ENCODE measurements at regions of chr10 and their contacts with region 1.

Region 1: DNA sequence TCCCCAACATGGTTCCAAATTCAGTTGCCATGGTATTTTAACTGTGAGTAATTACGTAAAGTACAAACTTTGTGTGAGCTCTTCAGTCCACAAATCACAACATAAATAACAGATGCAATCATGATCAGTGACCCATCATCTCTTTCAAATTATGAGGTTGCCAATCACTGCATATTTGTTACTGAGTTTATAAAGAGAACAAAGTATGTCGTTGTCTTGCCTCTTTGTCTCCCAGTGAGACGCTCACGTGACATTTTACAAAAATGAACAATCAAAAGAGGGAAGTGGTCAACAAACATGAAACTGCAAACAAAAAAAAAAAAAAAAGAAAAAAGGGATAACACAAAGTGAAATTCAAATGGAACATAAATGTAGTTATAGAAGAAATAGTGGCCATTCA is 122.7 kb upstream of the PDSS1 start:
- DNase-seq: peak; percentile 67
- ATAC-seq: peak; percentile 87
- H3K4me3 ChIP-seq: no peak overlapping the region
- H3K27ac ChIP-seq: 0 out of 2 replicates have a peak overlapping the region, but pooled peaks have one; percentile 18
- H3K4me1 ChIP-seq: peaks cover 7% of the 10 kb centered on the region; the same call in 1 of the 2 replicates
- H3K27me3 ChIP-seq: no peaks in the 10 kb centered on the region
- CTCF ChIP-seq: no peak
- EP300 ChIP-seq: peak; percentile 68 to 88; a peak in 3 of 4 replicates
- POLR2A ChIP-seq: no peak
- RAD21 ChIP-seq: no peak

Region 2: GRCh38 chr10:27328946-27329345 is 754.2 kb after region 1 on chr10:
- CTCF ChIA-PET with region 1: no interaction called
- POLR2A ChIA-PET with region 1: no interaction called
- RAD21 ChIA-PET with region 1: no interaction called
- SMC1A ChIA-PET with region 1: no interaction called
- in situ Hi-C with region 1: loop called (anchors 5 kb)
- intact Hi-C with region 1: loop called (anchors 5 kb)
- DNase-seq: no peak
- ATAC-seq: no peak
- H3K4me3 ChIP-seq: no peak overlapping the region
- H3K27ac ChIP-seq: no peak overlapping the region
- H3K4me1 ChIP-seq: no peaks in the 10 kb centered on the region
- H3K27me3 ChIP-seq: no peaks in the 10 kb centered on the region
- CTCF ChIP-seq: no peak
- EP300 ChIP-seq: no peak
- POLR2A ChIP-seq: no peak
- RAD21 ChIP-seq: no peak

Measured in GM12878 (cell line).